Activated CD4-positive, alpha-beta T cell treated with anti-CD3 and anti-CD28 coated beads for 36 hours (primary cell): ENCODE measurements at regions of chr17 and their contacts with region 1.

Region 1: DNA sequence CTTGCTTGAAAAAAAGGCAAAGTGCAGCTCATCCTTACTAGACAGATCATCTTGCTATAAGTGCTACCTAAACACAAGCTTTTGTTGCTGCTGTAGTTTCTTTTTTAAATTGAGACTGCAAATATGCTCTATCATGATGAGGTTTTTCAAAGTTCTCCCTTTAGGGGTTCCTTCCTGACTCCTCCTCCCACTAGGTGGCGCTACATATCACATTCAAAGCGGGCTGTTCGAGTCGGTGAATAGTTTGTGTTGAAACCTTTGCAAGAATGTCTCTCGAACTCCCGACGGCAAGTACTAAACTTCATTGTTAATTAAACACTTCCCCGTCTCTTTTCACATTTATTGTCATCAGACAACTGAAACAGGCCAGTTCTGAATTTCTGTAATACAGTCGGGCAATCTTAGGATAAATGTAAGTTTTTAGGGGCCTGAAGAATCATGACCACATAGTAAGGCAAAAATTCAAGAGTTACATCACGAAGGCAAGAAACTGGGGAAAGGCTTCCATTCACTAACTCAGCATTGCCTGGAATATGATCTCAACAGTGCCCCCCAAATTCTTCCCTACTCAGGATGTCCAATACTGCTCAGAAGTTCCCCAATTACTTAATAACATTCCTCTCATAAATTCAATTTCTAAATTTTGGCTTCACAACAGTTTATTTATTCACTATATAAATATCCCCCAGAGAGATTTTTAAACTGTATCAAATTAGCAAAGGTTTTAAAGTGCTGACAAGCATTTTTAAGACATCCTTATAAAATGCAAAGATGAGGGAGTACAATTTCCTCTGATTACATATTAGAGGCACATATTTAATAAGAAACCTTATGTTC is 6.7 kb downstream of the HS3ST3A1 start:
- DNase-seq: peak; percentile 89
- ATAC-seq: peak; percentile 84
- H3K4me3 Mint-ChIP-seq: no peak overlapping the region
- H3K27ac Mint-ChIP-seq: no peak overlapping the region
- H3K4me1 Mint-ChIP-seq: peaks cover 4% of the 10 kb centered on the region
- H3K27me3 Mint-ChIP-seq: peaks cover 29% of the 10 kb centered on the region

Region 2: GRCh38 chr17:13403982-13404946 is 190.7 kb before region 1 on chr17:
- CTCF ChIA-PET with region 1: no interaction called
- POLR2A ChIA-PET with region 1: no interaction called
- intact Hi-C with region 1: no loop called
- DNase-seq: no peak
- ATAC-seq: no peak
- H3K4me3 Mint-ChIP-seq: no peak overlapping the region
- H3K27ac Mint-ChIP-seq: no peak overlapping the region
- H3K4me1 Mint-ChIP-seq: no peaks in the 10 kb centered on the region
- H3K27me3 Mint-ChIP-seq: no peaks in the 10 kb centered on the region

Region 3: DNA sequence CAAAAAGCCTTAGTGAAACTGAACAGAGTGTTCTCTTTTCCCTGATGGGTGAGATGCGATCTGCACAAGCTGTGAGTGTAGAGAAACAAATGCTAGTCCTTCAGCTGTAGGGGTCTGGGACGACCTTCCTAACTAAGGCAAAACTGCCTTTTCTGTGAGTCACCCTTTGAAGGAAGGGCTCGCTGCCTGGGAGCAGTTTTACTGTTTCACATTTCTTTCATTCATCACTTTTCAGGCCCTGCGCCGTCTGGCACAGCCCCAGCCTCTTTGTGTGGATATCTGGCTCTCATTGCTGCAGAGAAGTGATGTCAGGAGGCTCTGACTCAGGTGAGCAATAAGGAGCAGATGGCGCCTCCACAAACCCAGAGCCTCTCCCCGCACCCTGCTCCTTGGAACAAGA is 50.7 kb before region 1 on chr17:
- CTCF ChIA-PET with region 1: no interaction called
- POLR2A ChIA-PET with region 1: no interaction called
- intact Hi-C with region 1: no loop called
- DNase-seq: no peak
- ATAC-seq: no peak
- H3K4me3 Mint-ChIP-seq: no peak overlapping the region
- H3K27ac Mint-ChIP-seq: no peak overlapping the region
- H3K4me1 Mint-ChIP-seq: no peaks in the 10 kb centered on the region
- H3K27me3 Mint-ChIP-seq: peaks cover 14% of the 10 kb centered on the region

Region 4: DNA sequence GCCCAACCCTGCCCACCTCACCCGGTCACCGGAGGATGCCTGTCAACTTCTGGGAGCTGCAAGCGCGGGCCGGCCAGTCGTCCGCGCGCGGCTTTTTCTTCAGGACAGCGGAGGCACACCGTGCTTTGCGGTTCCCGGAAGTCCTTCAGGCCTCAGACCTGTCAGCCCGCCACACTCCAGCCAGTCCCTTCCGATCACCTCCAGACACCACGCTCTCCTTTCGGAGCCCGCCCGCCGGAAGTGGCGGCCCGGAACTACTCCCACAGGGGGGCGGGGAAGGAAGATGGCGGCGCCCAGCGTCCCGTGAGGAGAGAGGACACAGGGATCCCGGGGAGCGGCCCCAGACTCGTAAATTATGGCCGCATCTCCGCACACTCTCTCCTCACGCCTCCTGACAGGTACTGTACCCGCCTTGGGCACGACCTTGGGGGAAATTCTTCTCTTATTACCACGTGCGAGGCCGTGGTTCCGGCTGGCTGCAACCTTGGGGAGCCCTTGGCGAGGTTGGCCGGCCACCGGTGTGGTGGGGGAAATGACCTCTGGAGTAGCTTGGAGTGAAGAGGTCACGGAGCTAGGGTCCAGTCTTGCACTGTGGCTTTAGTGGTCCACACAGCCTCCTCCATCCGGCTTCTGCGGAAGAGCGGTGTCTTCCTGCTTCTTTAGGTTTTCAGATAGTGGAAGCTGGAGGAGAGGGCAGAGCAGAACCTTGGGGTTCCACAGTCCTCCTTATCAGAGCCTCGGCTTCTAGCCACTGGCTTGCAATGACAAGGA is 474.5 kb after region 1 on chr17 and contains the start of gene COX10:
- CTCF ChIA-PET with region 1: no interaction called
- POLR2A ChIA-PET with region 1: no interaction called
- intact Hi-C with region 1: loop called in 1 of 2 experiments (anchors 5 kb)
- DNase-seq: peak; percentile 91
- ATAC-seq: peak; percentile 93
- H3K4me3 Mint-ChIP-seq: peak within 1 kb of the TSS; percentile 94
- H3K27ac Mint-ChIP-seq: peak within 1 kb of the TSS; percentile 94
- H3K4me1 Mint-ChIP-seq: peaks cover 54% of the 10 kb centered on the region
- H3K27me3 Mint-ChIP-seq: no peaks in the 10 kb centered on the region
- total RNA-seq, gene COX10: 22.0 to 32.5 TPM

Region 5: GRCh38 chr17:14553855-14554254 is 958.9 kb after region 1 on chr17:
- CTCF ChIA-PET with region 1: no interaction called
- POLR2A ChIA-PET with region 1: no interaction called
- intact Hi-C with region 1: loop called in 1 of 2 experiments (anchors 5 kb)
- DNase-seq: no peak
- ATAC-seq: no peak
- H3K4me3 Mint-ChIP-seq: no peak overlapping the region
- H3K27ac Mint-ChIP-seq: no peak overlapping the region
- H3K4me1 Mint-ChIP-seq: peaks cover 3% of the 10 kb centered on the region
- H3K27me3 Mint-ChIP-seq: no peaks in the 10 kb centered on the region

Region 6: DNA sequence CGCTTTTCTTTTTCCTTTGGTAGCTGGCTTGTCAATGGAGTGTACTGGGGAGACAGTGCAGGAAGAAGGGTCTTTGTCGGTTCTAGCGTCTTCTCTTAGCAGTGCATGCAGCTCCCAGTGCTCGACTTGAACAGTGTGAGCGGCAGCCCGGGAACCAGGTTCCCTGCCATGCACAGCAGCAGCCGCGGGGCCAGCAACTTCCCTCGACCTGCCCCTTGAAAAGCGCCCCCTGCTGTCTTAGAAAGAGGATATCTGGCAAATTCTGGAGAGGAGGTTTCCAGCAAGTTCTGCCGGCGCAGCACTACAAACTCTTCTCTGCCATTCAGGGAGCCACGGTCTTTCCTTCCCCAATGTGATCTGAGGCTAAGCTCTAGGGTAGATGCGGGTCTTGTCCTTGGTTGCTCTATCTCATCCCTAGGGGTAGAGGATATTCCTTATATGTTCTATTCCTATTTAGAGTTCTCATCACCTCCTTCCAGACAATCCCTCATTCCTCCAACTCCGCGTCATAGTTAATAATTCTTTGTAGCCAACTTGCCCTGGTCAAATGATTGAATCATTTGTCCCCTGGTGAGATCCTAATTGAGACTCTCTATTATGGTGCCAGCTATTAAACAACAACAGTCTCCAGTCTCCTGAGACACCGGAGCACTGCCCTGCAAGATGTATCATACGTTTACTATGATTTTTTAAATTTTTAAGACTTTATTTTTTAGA is 1218.8 kb after region 1 on chr17:
- CTCF ChIA-PET with region 1: no interaction called
- POLR2A ChIA-PET with region 1: no interaction called
- intact Hi-C with region 1: loop called in 1 of 2 experiments (anchors 1 kb)
- DNase-seq: peak; percentile 63
- ATAC-seq: no peak
- H3K4me3 Mint-ChIP-seq: no peak overlapping the region
- H3K27ac Mint-ChIP-seq: no peak overlapping the region
- H3K4me1 Mint-ChIP-seq: peaks cover 16% of the 10 kb centered on the region
- H3K27me3 Mint-ChIP-seq: peaks cover 11% of the 10 kb centered on the region

Region 7: GRCh38 chr17:15171167-15172047 is 1576.4 kb after region 1 on chr17:
- CTCF ChIA-PET with region 1: no interaction called
- POLR2A ChIA-PET with region 1: no interaction called
- intact Hi-C with region 1: loop called in 1 of 2 experiments (anchors 10 kb)
- DNase-seq: peak; percentile 59
- ATAC-seq: peak; percentile 42
- H3K4me3 Mint-ChIP-seq: no peak overlapping the region
- H3K27ac Mint-ChIP-seq: no peak overlapping the region
- H3K4me1 Mint-ChIP-seq: no peaks in the 10 kb centered on the region
- H3K27me3 Mint-ChIP-seq: peaks cover 13% of the 10 kb centered on the region